Right cardiac atrium (tissue), 5 donors: ENCODE measurements at regions of chr13 and their contacts with region 1.

Region 1: GRCh38 chr13:57624565-57625435 is 6.7 kb upstream of the PCDH17 start:
- DNase-seq: no peak
- ATAC-seq: no peak
- H3K4me3 ChIP-seq: no peak overlapping the region
- H3K27ac ChIP-seq: no peak overlapping the region
- H3K4me1 ChIP-seq: no peaks in the 10 kb centered on the region
- H3K27me3 ChIP-seq: no peaks in the 10 kb centered on the region

Region 2: DNA sequence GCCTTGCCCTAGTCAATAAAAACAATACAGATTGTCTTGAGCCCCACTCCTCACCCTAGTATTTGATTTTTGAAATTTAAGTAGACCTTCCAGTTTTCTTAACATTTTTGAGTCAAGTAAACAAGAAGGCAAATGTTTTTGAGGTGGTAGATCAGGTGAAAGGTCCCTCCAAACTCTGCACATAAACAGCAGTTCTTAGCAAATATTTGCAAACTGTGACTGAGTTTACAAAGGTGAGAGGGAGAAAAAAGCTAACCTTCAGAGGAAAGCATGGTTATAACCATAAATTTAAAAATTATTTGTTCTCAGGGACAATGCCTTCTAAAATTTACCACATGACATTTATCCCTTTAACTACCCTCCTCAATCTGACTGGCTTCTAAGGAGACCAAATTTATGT is 77.9 kb before region 1 on chr13:
- intact Hi-C with region 1: no loop called
- DNase-seq: no peak
- ATAC-seq: no peak
- H3K4me3 ChIP-seq: no peak overlapping the region
- H3K27ac ChIP-seq: no peak overlapping the region
- H3K4me1 ChIP-seq: no peaks in the 10 kb centered on the region
- H3K27me3 ChIP-seq: no peaks in the 10 kb centered on the region

Region 3: GRCh38 chr13:57857945-57858344 is 233.1 kb after region 1 on chr13:
- intact Hi-C with region 1: loop called in 1 of 4 experiments (anchors 5 kb)
- DNase-seq: no peak
- ATAC-seq: no peak
- H3K4me3 ChIP-seq: no peak overlapping the region
- H3K27ac ChIP-seq: no peak overlapping the region
- H3K4me1 ChIP-seq: no peaks in the 10 kb centered on the region
- H3K27me3 ChIP-seq: no peaks in the 10 kb centered on the region

Region 4: DNA sequence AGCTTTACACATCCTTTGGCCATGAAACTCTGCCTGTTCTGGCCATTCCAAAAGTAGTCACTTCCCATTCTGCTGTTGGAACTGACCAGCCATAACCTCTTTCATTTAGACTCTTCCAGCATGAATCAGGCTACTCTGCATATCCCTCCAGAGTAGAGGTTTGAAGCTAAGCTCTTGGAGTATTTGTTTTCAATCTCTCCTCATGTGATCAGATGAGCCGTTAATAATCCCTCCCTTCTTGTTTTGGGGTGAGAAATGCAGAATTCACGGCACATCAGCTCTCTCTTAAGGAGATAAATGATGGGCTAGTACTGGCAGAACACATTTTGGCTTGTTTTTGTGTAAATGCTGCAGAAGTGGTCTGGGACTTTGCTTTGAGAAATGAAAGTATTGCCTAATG is 526.7 kb after region 1 on chr13:
- intact Hi-C with region 1: no loop called
- DNase-seq: no peak
- ATAC-seq: peak in 1 of 2 donors; percentile 45
- H3K4me3 ChIP-seq: no peak overlapping the region
- H3K27ac ChIP-seq: no peak overlapping the region
- H3K4me1 ChIP-seq: no peaks in the 10 kb centered on the region
- H3K27me3 ChIP-seq: no peaks in the 10 kb centered on the region